ENCODE measurements at regions of chr15 and their contacts with region 1.

Region 1: DNA sequence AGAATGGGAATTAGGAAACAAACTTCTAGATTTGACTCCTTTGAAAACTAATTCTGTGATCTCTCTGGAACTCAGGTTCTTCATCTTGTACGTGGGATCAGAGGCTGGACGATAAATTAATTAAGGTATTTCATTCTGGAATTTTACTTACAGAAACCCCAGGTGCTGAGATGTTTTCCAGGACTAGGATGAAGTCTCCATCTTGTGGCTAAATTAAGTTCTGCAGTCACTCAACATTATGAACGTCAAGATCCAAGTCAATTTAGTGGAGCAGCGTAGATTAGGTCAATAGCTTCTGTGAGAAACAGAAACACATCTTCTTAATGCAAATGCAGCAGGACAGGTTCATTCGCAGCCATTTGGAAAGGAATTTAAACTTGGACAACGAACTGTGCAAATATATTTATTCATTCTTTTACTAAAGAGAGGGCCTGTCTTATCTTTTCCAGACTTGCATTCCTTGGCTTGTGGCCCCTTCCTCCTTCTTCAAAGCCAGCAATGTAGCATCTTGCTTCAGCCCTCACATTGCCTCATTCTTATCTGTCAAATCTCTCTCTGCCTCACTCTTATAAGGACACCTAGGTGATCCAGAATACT is 26.7 kb upstream of the TMC3 start:
- DNase-seq: peak; percentile 29 to 38
- H3K4me3 ChIP-seq: no peak overlapping the region
- H3K4me1 ChIP-seq: no peaks in the 10 kb centered on the region
- H3K27me3 ChIP-seq: peaks cover 10% of the 10 kb centered on the region

Region 2: DNA sequence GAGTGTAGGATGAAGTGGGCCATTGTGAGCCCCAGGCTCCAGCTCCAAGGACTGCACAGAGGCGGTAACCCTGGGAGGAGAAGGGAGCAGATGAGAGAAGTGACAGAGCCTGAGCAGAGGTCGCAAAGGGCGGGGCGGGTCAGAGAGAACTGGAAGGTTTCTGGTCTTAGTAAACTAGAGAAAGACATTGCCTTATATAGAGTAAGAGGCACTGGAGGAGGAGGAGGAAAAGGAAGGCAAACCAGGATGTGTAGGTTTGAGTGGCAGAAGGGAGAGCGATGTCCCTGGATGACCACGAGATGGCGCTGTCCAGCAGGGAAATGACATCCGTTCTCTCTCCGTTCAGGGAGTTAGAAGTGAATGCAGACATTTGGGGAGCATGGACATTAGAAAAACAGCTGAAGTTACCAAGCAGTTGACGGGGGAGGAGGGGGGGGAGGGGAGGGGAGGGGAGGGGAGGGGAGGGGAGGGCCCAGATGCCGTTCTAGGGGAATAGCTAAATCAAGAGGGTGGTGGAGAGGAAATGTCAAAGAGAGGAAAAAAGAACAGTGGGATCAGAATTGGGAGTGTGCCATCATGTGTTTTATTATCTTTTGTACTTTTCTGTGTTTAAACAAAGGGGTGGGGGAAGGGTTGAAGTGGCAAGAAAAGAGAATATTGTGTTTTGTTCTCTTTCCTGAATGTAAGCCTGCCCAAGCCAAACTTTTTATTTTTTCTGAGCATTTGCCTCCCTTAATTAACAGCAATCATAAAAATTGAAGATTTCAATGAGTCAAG is 125.6 kb before region 1 on chr15:
- in situ Hi-C with region 1: loop called (anchors 5 kb)
- DNase-seq: peak; percentile 91 to 95
- H3K4me3 ChIP-seq: no peak overlapping the region
- H3K4me1 ChIP-seq: peaks cover 10% of the 10 kb centered on the region
- H3K27me3 ChIP-seq: peaks cover 24% of the 10 kb centered on the region

Region 3: GRCh38 chr15:81351651-81352050 is 49.1 kb before region 1 on chr15:
- in situ Hi-C with region 1: no loop called
- DNase-seq: no peak
- H3K4me3 ChIP-seq: no peak overlapping the region
- H3K4me1 ChIP-seq: no peaks in the 10 kb centered on the region
- H3K27me3 ChIP-seq: peaks cover 13% of the 10 kb centered on the region